GM12878 (cell line): ENCODE measurements at regions of chr12 and their contacts with region 1.

Region 1: GRCh38 chr12:128857133-128857763 is 4.0 kb downstream of the GLT1D1 start:
- DNase-seq: peak; percentile 31
- ATAC-seq: peak; percentile 17
- H3K4me3 ChIP-seq: no peak overlapping the region
- H3K27ac ChIP-seq: no peak overlapping the region
- H3K4me1 ChIP-seq: peaks cover 11% of the 10 kb centered on the region; the same call in 1 of the 2 replicates
- H3K27me3 ChIP-seq: no peaks in the 10 kb centered on the region
- CTCF ChIP-seq: no peak
- EP300 ChIP-seq: no peak
- POLR2A ChIP-seq: no peak
- RAD21 ChIP-seq: no peak

Region 2: DNA sequence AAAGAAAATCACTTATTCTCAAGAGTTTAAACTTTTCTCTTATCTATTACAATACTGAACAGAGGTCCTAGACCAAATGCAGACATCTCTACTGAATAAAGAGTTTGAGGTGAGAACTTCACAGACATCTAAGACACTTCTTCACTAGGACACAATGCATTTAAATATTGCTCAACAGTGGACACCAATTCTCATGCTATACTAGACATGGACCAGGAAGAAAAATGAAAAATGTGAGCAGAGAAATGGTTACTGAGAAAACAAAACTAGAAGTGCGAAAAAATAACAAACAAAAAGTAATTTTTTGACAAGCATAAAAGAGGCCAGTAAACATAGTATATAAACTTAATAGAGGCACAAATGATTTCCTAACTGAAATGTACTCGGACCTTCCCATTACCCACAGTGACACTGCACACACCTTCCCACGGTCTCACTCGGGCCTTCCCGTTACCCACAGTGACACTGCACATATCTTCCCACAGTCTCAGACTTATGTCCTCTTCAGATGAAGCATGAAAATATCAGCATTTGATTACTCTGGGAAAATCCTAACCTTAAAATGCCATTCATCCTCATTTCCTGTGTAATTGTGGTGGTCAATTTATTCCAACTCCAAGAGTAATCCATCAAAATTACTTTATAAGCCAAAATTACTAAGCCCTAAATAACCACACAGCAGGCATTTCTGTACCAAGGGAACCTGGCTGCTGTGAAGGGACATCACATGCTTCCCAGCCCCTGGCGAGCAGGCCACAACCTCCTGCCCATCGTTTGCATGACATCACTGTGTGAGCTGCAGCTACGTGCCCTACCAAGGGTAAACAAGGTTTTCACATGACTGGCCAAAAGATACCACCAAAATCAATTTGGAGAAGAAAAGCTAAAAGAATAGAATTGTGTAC is 39.9 kb before region 1 on chr12:
- CTCF ChIA-PET with region 1: interaction called, 7 read pairs
- POLR2A ChIA-PET with region 1: interaction called, 6 read pairs
- RAD21 ChIA-PET with region 1: interaction called, 16 read pairs
- SMC1A ChIA-PET with region 1: interaction called, 19 read pairs
- in situ Hi-C with region 1: no loop called
- intact Hi-C with region 1: loop called (anchors 1 kb)
- DNase-seq: peak; percentile 90
- ATAC-seq: peak; percentile 42
- H3K4me3 ChIP-seq: peak overlapping the region; percentile 98
- H3K27ac ChIP-seq: peak overlapping the region; percentile 94
- H3K4me1 ChIP-seq: peaks cover 70% of the 10 kb centered on the region
- H3K27me3 ChIP-seq: no peaks in the 10 kb centered on the region
- CTCF ChIP-seq: no peak
- EP300 ChIP-seq: peak in 1 of 2 experiments; percentile 10; a peak in 2 of 4 replicates
- POLR2A ChIP-seq: peak; percentile 54
- RAD21 ChIP-seq: no peak

Region 3: GRCh38 chr12:128872303-128872702 is 15.1 kb after region 1 on chr12:
- CTCF ChIA-PET with region 1: interaction called, 5 read pairs
- POLR2A ChIA-PET with region 1: interaction called, 5 read pairs
- RAD21 ChIA-PET with region 1: no interaction called
- SMC1A ChIA-PET with region 1: interaction called, 11 read pairs
- in situ Hi-C with region 1: no loop called
- intact Hi-C with region 1: no loop called
- DNase-seq: no peak
- ATAC-seq: no peak
- H3K4me3 ChIP-seq: no peak overlapping the region
- H3K27ac ChIP-seq: no peak overlapping the region
- H3K4me1 ChIP-seq: no peaks in the 10 kb centered on the region
- H3K27me3 ChIP-seq: no peaks in the 10 kb centered on the region
- CTCF ChIP-seq: no peak
- EP300 ChIP-seq: no peak
- POLR2A ChIP-seq: no peak
- RAD21 ChIP-seq: no peak

Region 4: DNA sequence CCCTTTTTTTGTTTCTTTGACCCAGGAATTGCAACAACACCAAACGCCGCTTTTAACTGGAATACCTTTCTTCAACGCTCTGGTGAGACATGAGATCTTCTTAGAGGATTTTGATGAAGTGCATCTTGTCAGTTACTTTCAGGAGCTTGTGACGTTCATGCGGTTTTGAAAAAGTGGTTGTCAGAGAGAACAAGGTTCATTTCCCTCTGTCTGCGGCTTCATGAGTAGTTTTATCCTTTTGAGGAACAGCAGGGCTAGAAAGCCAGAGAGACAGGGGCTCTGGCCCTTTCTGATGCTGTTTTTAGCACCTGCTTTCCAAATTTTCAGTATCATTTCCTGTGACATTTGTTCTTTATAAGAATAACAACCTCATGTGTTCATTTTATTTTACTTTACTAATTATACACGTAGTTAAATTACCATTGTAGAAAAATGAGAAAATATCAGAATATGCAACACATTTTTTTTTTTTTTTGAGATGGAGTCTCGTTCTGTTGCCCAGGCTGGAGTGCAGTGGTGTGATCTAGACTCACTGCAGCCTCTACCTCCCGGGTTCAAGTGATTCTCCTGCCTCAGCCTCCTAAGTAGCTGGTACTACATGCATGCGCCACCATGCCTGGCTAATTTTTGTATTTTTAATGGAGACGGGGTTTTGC is 57.8 kb after region 1 on chr12:
- CTCF ChIA-PET with region 1: interaction called, 8 read pairs
- POLR2A ChIA-PET with region 1: interaction called, 3 read pairs
- RAD21 ChIA-PET with region 1: interaction called, 4 read pairs
- SMC1A ChIA-PET with region 1: interaction called, 4 read pairs
- in situ Hi-C with region 1: no loop called
- intact Hi-C with region 1: loop called (anchors 2 kb)
- DNase-seq: peak; percentile 88
- ATAC-seq: peak; percentile 95
- H3K4me3 ChIP-seq: no peak overlapping the region
- H3K27ac ChIP-seq: no peak overlapping the region
- H3K4me1 ChIP-seq: peaks cover 9% of the 10 kb centered on the region; the same call in 1 of the 2 replicates
- H3K27me3 ChIP-seq: no peaks in the 10 kb centered on the region
- CTCF ChIP-seq: no peak
- EP300 ChIP-seq: peak; percentile 95 to 98
- POLR2A ChIP-seq: no peak
- RAD21 ChIP-seq: no peak

Region 5: DNA sequence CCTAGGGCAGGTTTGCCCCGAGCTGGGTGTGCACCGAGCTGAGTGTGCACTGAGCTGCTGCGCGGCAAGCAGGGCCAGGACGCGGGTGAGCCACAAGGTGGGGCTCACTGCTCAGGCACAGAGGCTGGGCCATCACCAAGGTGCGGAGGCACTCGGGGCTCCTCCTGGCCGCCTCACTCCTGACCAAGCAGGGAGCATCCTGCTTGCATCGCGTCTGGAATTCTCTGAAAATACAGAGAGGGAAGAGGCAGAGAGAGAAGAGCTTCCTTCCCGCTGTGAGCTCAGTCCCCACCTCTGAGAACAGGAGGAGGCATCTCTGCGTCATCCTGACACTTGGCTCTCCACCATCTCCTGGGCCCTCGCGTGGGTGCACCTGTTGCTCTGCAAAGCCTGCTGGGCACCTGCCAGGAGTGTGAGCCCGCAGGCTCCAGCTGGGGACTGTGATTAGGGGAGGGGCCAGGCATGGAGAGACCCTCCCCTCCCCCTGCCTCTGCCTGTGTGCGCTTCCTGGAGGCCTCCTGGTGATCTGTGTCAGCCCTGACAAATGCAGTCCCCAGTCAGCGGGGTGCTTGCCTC is 112.3 kb after region 1 on chr12:
- CTCF ChIA-PET with region 1: interaction called, 12 read pairs
- POLR2A ChIA-PET with region 1: no interaction called
- RAD21 ChIA-PET with region 1: interaction called, 4 read pairs
- SMC1A ChIA-PET with region 1: interaction called, 8 read pairs
- in situ Hi-C with region 1: no loop called
- intact Hi-C with region 1: no loop called
- DNase-seq: peak; percentile 20
- ATAC-seq: peak; percentile 95
- H3K4me3 ChIP-seq: no peak overlapping the region
- H3K27ac ChIP-seq: no peak overlapping the region
- H3K4me1 ChIP-seq: peaks cover 5% of the 10 kb centered on the region; the same call in 1 of the 2 replicates
- H3K27me3 ChIP-seq: no peaks in the 10 kb centered on the region
- CTCF ChIP-seq: peak; percentile 67 to 83 (median 81)
- EP300 ChIP-seq: no peak
- POLR2A ChIP-seq: no peak
- RAD21 ChIP-seq: peak; percentile 73